ENCODE measurements at regions of chr1 and their contacts with region 1.

Region 1: GRCh38 chr1:46223472-46223943 is 20.4 kb downstream of the LURAP1 start:
- DNase-seq: peak; percentile 55 to 79 (median 62)
- ATAC-seq: peak; percentile 72 to 91 (median 84)
- H3K4me3 ChIP-seq: no peak overlapping the region
- H3K27ac ChIP-seq: no peak overlapping the region
- H3K4me1 ChIP-seq: peaks cover 0 to 25% (median 0%) of the 10 kb centered on the region in 12 donors
- H3K27me3 ChIP-seq: no peaks in the 10 kb centered on the region
- CTCF ChIP-seq: peak; percentile 79 to 95 (median 90)
- POLR2A ChIP-seq: no peak

Region 2: GRCh38 chr1:46036894-46037839 is 186.3 kb before region 1 on chr1:
- intact Hi-C with region 1: loop called in 6 of 10 experiments (anchors 2 to 5 kb)
- DNase-seq: peak; percentile 81 to 92 (median 85)
- ATAC-seq: peak; percentile 35 to 70 (median 59)
- H3K4me3 ChIP-seq: no peak overlapping the region
- H3K27ac ChIP-seq: peak overlapping the region in 9 of 12 donors; percentile 8 to 52 (median 35)
- H3K4me1 ChIP-seq: peaks cover 11 to 67% (median 39%) of the 10 kb centered on the region in 12 donors
- H3K27me3 ChIP-seq: no peaks in the 10 kb centered on the region
- CTCF ChIP-seq: peak; percentile 93 to 99 (median 97)
- POLR2A ChIP-seq: no peak